ENCODE measurements at regions of chr3 and their contacts with region 1.

Region 1: DNA sequence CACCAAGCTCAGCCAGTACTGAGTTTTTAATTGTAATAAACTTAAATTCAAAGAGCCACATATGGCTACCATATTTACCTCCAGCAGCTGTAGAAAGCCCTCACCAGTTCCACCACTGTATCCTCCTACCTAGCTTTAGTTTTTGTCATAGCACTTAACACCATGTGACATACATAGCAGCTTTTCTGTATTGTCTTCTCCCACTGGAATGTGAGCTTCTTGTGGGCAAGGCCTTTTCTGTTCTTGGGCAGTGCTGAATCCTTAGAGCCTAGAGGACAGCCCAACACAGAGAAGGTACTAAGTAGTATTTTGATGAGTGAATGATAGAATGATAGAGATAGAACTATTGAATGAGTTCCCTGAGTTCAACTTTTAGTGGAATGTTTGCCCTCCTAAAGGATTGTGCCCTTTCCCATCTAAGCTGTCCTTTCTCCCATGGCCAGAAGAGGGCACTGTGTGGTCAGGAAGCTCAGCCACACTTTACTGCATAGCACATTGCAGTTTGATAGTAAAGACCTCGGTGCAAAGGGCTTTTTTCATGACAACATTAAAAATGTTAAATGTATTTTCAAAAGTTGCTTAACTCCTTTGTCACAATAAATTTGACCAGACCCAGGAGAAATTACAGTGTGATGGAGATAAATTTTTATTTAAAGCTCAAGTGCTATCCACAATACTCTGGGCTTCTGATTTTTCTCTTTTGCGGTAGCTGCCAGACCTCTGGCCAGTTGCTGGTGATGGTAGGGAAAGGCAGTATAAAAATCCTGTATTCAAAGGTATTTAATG is 115.8 kb downstream of the GHSR start:
- DNase-seq: peak; percentile 67
- ATAC-seq: peak; percentile 81
- H3K4me3 Mint-ChIP-seq: no peak overlapping the region
- H3K27ac Mint-ChIP-seq: no peak overlapping the region
- H3K4me1 Mint-ChIP-seq: peaks cover 5% of the 10 kb centered on the region
- H3K27me3 Mint-ChIP-seq: no peaks in the 10 kb centered on the region

Region 2: DNA sequence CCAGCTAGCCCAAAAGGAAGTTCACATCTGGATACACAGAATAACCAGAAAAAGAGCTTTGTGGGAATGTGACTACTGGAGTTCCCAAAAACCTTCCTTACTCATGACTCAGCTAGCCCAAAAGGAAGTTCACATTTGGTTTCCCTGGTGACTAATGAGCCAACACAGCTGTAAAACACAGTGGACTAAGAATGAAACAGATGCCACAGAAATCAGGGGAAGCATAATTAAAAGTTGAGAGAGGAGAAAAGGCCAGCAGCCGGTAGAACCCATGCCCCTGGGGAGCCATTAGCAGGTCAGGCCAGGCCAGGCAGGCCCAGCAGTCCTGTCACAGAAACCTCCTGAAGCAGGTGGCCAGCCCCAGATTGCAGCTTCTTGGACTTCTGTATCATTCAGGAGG is 14.5 kb before region 1 on chr3:
- CTCF ChIA-PET with region 1: interaction called, 16 read pairs
- POLR2A ChIA-PET with region 1: no interaction called
- intact Hi-C with region 1: no loop called
- DNase-seq: no peak
- ATAC-seq: peak; percentile 42
- H3K4me3 Mint-ChIP-seq: no peak overlapping the region
- H3K27ac Mint-ChIP-seq: no peak overlapping the region
- H3K4me1 Mint-ChIP-seq: peaks cover 13% of the 10 kb centered on the region
- H3K27me3 Mint-ChIP-seq: no peaks in the 10 kb centered on the region

Region 3: DNA sequence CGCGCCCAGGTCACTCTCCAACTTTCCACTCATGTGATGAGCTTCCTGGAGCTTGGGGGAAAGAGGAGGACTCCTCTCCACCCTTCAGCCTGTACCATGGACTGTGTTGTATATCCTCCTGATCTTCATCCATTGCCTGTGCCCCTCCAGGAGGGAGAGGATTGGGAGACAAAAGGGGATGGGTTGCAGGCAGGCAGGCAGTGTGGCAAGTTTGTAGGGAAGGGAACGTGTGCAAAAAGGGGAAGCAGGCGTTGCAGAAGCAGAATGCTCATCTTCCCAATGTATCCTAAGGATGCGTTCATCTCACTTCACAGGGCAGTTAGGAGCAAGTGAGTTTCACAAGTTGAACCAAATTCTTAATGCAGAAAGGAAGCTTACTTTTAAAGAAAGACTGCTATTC is 143.9 kb after region 1 on chr3:
- CTCF ChIA-PET with region 1: interaction called, 11 read pairs
- POLR2A ChIA-PET with region 1: no interaction called
- intact Hi-C with region 1: loop called (anchors 2 to 5 kb)
- DNase-seq: no peak
- ATAC-seq: no peak
- H3K4me3 Mint-ChIP-seq: peak overlapping the region; percentile 79
- H3K27ac Mint-ChIP-seq: peak overlapping the region; percentile 4
- H3K4me1 Mint-ChIP-seq: peaks cover 20% of the 10 kb centered on the region
- H3K27me3 Mint-ChIP-seq: no peaks in the 10 kb centered on the region

Region 4: GRCh38 chr3:172666873-172667694 is 334.6 kb after region 1 on chr3:
- CTCF ChIA-PET with region 1: interaction called, 16 read pairs
- POLR2A ChIA-PET with region 1: no interaction called
- intact Hi-C with region 1: loop called (anchors 1 kb)
- DNase-seq: peak; percentile 88
- ATAC-seq: peak; percentile 96
- H3K4me3 Mint-ChIP-seq: no peak overlapping the region
- H3K27ac Mint-ChIP-seq: no peak overlapping the region
- H3K4me1 Mint-ChIP-seq: peaks cover 5% of the 10 kb centered on the region
- H3K27me3 Mint-ChIP-seq: no peaks in the 10 kb centered on the region